ENCODE measurements at regions of chr2 and their contacts with region 1.

Region 1: GRCh38 chr2:20962939-20963557 is 80.8 kb downstream of the APOB start:
- DNase-seq: peak; percentile 34 to 76
- ATAC-seq: peak; percentile 75

Region 2: DNA sequence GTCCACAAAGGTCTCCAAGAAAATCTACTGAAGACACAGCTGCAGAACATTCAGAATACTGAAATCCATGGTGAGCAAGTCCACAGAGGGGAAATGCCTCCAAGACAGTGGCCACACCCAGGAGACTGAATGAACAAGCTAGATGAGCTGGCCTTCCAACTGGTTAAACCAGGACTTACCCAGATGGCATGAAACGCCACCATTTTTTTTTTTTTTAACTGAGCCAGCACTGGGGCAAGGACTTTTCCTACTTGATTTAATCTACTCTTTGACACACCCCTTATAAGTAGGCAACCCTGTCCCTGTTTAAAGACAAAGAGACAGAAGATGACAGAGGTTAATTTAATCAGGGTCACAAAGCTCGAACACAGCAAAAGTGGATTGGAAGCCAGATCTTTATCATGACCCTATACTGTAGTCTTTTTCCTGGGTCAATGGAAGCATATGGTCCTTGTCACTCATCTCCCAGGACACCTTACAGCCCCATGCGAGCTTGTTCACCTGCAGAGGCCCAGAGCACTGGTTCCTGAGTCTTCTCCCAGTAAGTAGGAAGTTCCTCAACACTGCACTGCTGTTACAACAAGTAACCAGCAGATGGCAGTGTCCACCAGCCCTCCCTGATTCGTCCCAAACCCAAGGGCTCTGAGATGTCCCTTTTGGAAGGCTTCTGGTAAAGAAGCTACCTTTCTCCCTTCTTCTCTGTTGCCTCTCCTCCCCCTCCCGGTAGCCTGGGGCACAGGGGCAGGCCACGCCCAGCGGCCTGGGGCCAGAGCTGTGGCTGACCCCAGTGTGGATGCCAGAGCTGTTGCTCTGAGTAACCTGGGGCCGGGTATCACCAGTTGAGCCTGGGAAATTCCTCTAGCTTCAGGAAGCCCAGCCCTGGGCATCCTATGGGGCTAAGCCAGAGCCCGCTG is 301.7 kb before region 1 on chr2:
- intact Hi-C with region 1: loop called (anchors 5 to 10 kb)
- DNase-seq: peak in 1 of 2 donors; percentile 64
- ATAC-seq: peak; percentile 75

Region 3: GRCh38 chr2:20781656-20782265 is 181.3 kb before region 1 on chr2:
- intact Hi-C with region 1: loop called in 1 of 2 experiments (anchors 5 kb)
- DNase-seq: no peak
- ATAC-seq: peak; percentile 28